ENCODE measurements at regions of chr6 and their contacts with region 1.

Region 1: DNA sequence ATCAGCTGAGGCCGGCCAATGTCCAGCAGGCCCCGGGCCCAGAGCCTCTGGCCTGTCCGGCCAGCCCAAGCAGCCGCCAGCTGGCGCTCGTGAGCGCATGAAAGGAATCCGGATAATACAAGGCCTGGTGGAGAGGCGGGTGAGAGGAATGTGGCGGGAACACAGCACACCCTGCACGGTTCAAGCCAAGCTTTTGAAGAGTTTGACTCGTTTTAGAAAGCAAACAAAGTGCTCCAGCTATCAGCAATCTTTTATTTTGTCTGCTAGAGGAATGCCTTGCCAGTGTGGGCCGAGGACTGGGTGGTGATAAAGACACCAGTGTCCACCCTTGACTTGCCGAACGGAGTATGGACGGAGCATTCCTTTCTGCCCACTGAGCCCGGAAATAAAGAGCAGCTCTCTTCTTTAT is 9.3 kb upstream of the NEDD9 start:
- DNase-seq: no peak
- H3K4me3 ChIP-seq: no peak overlapping the region
- H3K27ac ChIP-seq: no peak overlapping the region
- H3K4me1 ChIP-seq: peaks cover 26% of the 10 kb centered on the region
- H3K27me3 ChIP-seq: no peaks in the 10 kb centered on the region
- CTCF ChIP-seq: peak in 1 of 3 experiments; percentile 32
- POLR2A ChIP-seq: no peak

Region 2: GRCh38 chr6:11194356-11195218 is 47.2 kb before region 1 on chr6:
- intact Hi-C with region 1: no loop called
- DNase-seq: peak in 1 of 2 donors; percentile 56
- H3K4me3 ChIP-seq: no peak overlapping the region
- H3K27ac ChIP-seq: no peak overlapping the region
- H3K4me1 ChIP-seq: peaks cover 13% of the 10 kb centered on the region
- H3K27me3 ChIP-seq: no peaks in the 10 kb centered on the region
- CTCF ChIP-seq: no peak
- POLR2A ChIP-seq: no peak

Region 3: GRCh38 chr6:11270030-11271027 is 28.5 kb after region 1 on chr6:
- intact Hi-C with region 1: no loop called
- DNase-seq: peak in 1 of 2 donors; percentile 34
- H3K4me3 ChIP-seq: no peak overlapping the region
- H3K27ac ChIP-seq: no peak overlapping the region
- H3K4me1 ChIP-seq: no peaks in the 10 kb centered on the region
- H3K27me3 ChIP-seq: no peaks in the 10 kb centered on the region
- CTCF ChIP-seq: no peak
- POLR2A ChIP-seq: no peak

Region 4: DNA sequence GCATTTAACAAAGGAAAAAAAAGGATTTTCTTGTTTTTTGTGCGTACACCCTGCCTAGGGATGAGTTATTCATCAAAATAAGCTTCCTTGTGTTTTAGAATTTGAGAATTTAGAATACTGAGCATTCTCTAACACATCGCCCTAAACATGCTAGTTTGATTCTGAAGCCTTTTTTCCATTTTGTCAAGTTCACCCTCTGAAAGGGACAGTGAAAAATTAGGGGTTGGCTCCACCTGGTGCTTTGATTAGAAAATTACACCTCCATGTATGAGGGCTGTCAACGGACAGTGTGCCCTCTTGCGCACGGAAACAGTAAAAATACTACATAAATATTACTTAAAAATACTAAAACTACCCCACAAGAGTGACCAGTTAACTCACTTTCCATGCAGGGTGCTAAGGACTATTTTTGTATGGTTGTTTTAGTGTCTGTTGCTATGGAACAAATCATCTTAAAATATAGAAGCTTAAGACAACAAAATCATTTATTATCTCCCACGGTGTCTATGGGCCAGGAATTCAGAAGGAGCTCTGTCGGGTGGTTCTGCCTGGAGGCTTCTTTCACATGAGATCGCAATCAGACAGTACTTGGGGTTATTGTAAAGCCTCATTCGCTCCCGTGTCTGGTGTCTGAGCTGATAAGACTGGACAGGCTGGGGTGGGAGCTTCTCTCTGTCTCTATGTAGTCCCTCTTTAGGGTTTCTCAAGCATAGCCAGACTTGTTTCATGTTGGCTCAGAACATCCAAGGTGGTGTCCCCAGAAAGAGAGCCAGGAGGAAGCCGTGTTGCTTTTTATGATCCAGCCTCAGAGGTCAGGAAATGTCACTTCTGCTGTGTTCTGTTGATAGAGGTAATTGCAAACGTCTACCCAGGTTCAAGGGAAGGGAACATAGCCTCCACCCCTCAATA is 254.6 kb after region 1 on chr6:
- intact Hi-C with region 1: loop called (anchors 10 kb)
- DNase-seq: no peak
- H3K4me3 ChIP-seq: no peak overlapping the region
- H3K27ac ChIP-seq: peak overlapping the region; percentile 22
- H3K4me1 ChIP-seq: no peaks in the 10 kb centered on the region
- H3K27me3 ChIP-seq: no peaks in the 10 kb centered on the region
- CTCF ChIP-seq: peak; percentile 81 to 98 (median 96)
- POLR2A ChIP-seq: no peak

Region 5: DNA sequence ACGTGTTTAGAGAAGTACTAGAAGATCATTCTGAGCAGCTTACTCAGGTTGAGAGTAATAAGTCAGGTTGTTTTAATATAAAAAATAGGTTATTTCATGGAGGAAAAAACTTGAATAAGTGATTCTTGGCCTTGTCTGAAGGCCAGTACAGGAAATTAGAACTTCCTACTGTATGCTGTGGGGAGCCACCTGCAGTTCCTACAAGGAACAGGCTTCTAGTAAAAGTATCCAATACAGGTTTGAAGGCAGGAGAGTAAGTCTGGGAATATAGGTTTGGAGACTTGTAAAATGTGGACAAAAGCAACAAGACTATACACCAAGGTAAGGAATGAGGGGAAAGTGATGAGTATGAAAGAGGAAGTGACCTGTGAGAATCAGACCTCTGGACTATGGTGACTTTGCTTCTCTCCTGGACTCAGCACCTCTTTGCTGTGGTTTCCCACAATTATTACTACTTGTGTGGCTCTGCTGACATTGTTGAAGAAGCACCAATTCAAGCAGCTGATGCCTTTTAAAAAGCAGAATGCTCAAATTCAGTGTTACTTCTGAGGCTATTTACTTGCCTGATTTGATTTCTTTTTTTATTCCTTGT is 1808.0 kb after region 1 on chr6:
- intact Hi-C with region 1: loop called (anchors 5 kb)
- DNase-seq: no peak
- H3K4me3 ChIP-seq: no peak overlapping the region
- H3K27ac ChIP-seq: no peak overlapping the region
- H3K4me1 ChIP-seq: no peaks in the 10 kb centered on the region
- H3K27me3 ChIP-seq: no peaks in the 10 kb centered on the region
- CTCF ChIP-seq: no peak
- POLR2A ChIP-seq: no peak